ENCODE measurements at regions of chr6 and their contacts with region 1.

Region 1: DNA sequence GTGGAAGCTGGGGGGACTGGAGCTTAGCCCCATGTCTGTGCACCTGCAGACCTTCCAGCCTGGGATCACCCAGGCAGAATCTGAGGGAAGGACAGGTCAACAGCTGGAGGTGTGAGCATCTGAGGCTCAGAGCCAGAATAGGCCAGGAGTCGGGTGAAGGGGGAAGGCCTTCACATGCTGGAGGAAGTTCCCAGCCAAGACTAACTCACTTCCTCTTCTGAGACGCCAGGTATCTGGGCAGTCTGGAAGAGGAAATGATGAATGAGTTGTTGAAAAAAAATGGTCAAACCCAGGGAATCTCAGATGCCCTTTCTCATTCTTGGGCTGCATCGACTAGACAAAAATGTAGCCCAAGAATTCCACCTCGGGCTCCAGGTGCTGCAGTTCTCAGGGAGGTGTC is 73.6 kb upstream of the TIAM2 start:
- DNase-seq: no peak
- H3K4me3 ChIP-seq: no peak overlapping the region
- H3K27ac ChIP-seq: no peak overlapping the region
- H3K4me1 ChIP-seq: no peaks in the 10 kb centered on the region
- H3K27me3 ChIP-seq: no peaks in the 10 kb centered on the region
- CTCF ChIP-seq: no peak
- POLR2A ChIP-seq: no peak

Region 2: DNA sequence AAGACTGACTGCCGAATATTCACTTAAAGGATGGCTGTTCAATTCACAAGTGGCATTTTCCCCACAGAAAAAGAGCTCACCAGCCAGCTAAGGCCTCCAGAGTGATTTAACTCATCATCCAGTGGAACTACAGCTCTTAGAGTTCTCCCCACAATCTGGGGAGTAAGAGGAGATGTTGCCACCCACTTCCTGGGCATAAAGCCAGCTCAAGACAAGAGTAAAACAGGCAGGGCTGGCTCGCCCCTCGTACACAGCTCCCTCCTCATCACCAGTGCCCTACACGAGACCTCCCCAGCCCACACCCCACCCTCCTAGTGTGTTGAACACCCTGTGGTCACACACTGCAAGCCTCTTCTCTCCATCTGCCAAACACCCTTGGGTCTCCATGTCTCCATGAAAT is 517.7 kb before region 1 on chr6:
- intact Hi-C with region 1: loop called (anchors 5 kb)
- DNase-seq: no peak
- H3K4me3 ChIP-seq: no peak overlapping the region
- H3K27ac ChIP-seq: no peak overlapping the region
- H3K4me1 ChIP-seq: peaks cover 5% of the 10 kb centered on the region
- H3K27me3 ChIP-seq: no peaks in the 10 kb centered on the region
- CTCF ChIP-seq: no peak
- POLR2A ChIP-seq: no peak

Measured in vagina (tissue), 2 donors.